Heart left ventricle (tissue), 16 donors: ENCODE measurements at regions of chr6 and their contacts with region 1.

Region 1: DNA sequence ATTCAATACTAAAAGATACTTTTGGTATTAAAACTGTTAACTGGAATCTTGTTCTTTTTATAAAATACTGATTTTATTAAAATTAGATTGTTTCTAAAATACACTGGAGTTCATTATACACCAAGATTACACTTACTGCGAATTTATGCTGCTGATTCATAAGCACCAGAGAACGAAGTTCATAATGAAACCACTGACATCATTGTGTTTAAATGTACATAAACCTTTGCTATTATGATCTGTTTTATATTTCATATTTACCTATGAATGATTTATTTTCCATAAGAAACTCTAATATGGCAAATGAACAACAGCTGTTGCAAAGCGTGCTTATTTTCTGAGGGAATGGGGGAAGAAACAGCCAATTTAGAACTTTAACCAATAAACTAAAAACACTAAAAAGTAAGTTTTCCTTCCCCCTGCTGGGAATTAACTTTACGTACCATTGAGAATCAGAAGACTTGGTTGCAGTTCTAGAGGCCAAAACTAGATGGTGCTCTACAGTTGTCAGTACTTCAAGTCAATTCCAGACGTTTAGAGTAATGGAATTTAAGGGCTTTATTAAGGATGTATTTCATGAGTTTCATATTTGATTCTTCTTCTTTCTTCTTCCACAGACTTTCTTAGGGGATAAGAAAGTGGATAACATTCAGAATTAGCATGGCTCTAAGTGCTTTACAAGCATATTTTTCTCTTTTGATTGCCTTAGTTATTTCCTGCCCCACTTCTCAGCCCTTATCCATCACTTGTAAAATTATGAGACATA is 30.8 kb upstream of the COL19A1 start:
- DNase-seq: no peak
- ATAC-seq: peak in 2 of 4 donors; percentile 42 to 69
- H3K4me3 ChIP-seq: no peak overlapping the region
- H3K27ac ChIP-seq: no peak overlapping the region
- H3K4me1 ChIP-seq: peaks cover 0 to 5% (median 0%) of the 10 kb centered on the region in 12 donors
- H3K27me3 ChIP-seq: peaks cover 0 to 7% (median 0%) of the 10 kb centered on the region in 9 donors
- CTCF ChIP-seq: peak; percentile 58 to 89 (median 76)
- POLR2A ChIP-seq: no peak

Region 2: GRCh38 chr6:69232911-69233448 is 602.6 kb before region 1 on chr6:
- intact Hi-C with region 1: no loop called
- DNase-seq: peak; percentile 62 to 84 (median 80)
- ATAC-seq: peak; percentile 89 to 97 (median 94)
- H3K4me3 ChIP-seq: no peak overlapping the region
- H3K27ac ChIP-seq: no peak overlapping the region
- H3K4me1 ChIP-seq: no peaks in the 10 kb centered on the region
- H3K27me3 ChIP-seq: no peaks in the 10 kb centered on the region
- CTCF ChIP-seq: peak in 1 of 12 donors; percentile 12
- POLR2A ChIP-seq: no peak

Region 3: DNA sequence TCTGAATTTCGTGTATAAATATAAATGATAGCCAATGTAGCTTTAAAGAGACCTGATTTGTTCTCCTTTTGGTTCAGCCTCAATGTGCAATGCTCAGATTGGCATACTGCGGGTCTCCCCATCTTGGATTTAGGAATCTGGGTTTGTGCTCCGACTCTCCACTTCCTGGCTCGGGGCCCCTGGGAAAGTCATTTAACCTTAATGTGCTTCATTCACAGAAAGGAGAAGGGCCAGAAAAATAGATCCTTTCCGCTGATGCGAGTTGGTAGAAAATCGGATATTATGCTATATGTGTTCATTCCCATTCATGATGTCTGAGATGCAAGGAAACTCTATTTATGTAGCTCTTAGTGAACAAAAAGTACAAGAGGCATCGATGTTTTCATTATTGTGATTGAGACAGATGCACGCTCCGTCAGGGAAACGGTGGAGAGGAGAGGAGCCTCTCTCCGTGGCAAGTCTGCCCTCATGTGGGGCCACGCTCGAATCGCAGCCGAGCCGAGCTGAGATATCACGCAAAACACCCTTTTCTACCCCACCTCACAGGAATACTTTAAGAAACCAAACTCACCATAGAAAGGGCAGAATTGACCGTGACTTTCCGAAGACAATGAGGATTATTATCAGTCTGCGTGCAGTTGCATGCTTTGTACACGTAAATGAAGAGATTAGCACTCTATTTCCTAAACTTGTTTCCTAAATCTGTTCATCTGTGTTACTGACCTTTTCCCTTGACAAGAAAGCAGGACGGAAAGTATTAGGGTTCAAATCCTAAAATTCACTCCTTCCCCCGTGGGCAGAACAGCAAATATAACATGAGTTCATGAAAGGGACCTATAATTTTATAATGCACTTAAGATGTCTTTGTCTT is 330.7 kb after region 1 on chr6:
- intact Hi-C with region 1: loop called in 3 of 10 experiments (anchors 5 to 10 kb)
- DNase-seq: peak in 3 of 5 donors; percentile 19 to 37 (median 30)
- ATAC-seq: peak in 3 of 4 donors; percentile 60 to 76 (median 64)
- H3K4me3 ChIP-seq: peak overlapping the region in 1 of 12 donors; percentile 12
- H3K27ac ChIP-seq: no peak overlapping the region
- H3K4me1 ChIP-seq: no peaks in the 10 kb centered on the region
- H3K27me3 ChIP-seq: peaks cover 0 to 5% (median 0%) of the 10 kb centered on the region in 9 donors
- CTCF ChIP-seq: peak; percentile 22 to 61 (median 44)
- POLR2A ChIP-seq: no peak